Esophagus muscularis mucosa (tissue), 4 donors: ENCODE measurements at regions of chr11 and their contacts with region 1.

Region 1: DNA sequence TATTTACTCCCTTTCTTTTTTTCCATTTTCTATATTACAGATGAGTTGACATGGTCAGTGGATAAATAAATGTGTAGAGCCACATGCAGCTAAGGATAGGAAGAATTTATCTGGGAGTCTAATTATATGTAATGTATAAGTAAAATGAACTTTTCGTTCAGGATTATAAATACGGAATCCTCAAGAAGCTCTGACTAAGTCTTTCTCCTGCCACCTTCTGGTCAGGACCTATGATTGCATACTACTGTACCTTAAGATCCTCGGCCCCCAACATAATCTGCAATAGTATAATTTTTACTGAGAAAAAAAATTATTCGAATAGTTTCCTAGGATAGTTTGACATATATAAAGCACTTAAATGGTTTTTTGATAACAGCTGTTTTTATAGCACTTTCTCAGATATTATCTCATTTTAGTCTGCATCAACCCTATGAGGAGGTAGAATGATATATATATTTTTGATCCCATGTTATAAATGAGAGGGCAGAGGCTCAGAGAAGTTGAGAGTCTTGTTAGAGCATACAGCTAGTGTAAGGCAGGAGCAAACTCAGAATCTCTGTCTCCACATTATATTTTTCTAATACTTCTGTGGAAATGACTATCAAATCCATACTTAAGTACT is 36.1 kb downstream of the CCDC90B start:
- DNase-seq: no peak
- H3K4me3 ChIP-seq: no peak overlapping the region
- H3K27ac ChIP-seq: no peak overlapping the region
- H3K4me1 ChIP-seq: peaks cover 0 to 5% (median 1%) of the 10 kb centered on the region in 4 donors
- H3K27me3 ChIP-seq: no peaks in the 10 kb centered on the region
- CTCF ChIP-seq: peak; percentile 50 to 68 (median 55)
- EP300 ChIP-seq: no peak
- POLR2A ChIP-seq: no peak

Region 2: GRCh38 chr11:82906244-82906654 is 343.8 kb before region 1 on chr11:
- intact Hi-C with region 1: loop called (anchors 2 kb)
- DNase-seq: no peak
- H3K4me3 ChIP-seq: no peak overlapping the region
- H3K27ac ChIP-seq: no peak overlapping the region
- H3K4me1 ChIP-seq: peaks cover 0 to 12% (median 7%) of the 10 kb centered on the region in 4 donors
- H3K27me3 ChIP-seq: no peaks in the 10 kb centered on the region
- CTCF ChIP-seq: peak; percentile 52 to 57 (median 56)
- EP300 ChIP-seq: no peak
- POLR2A ChIP-seq: no peak

Region 3: DNA sequence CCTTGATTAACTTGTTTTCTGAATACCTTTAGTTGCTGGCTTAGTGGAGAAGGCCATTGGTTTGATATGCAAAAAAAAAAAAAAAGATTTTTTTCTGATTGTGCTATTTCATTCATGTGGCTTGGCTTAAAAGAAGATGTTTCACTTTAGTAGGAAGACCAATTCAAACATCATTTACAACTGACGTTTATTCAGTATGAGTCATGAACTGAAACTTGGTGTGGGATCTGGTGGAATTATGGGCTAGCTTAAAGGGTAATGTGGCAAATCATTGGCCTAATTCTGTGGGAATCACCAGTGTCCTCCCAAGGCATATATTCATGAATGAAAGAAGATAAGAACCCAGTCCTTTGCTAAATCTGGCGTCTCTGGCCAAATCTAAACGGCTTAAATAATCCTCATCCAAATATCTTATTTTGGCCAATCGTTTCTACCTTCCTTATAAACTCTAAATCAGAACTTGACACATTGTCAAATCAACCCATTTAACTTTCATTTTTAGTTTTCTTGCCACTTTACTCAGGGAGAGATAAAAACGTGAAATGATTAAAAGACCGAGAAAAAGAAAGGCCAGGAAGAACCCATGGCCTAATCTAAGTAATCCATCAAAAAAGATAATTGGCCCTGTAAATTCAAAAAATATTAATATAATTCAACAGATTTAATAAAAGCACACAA is 271.5 kb before region 1 on chr11:
- intact Hi-C with region 1: no loop called
- DNase-seq: no peak
- H3K4me3 ChIP-seq: no peak overlapping the region
- H3K27ac ChIP-seq: no peak overlapping the region
- H3K4me1 ChIP-seq: peaks cover 13 to 15% (median 14%) of the 10 kb centered on the region in 4 donors
- H3K27me3 ChIP-seq: no peaks in the 10 kb centered on the region
- CTCF ChIP-seq: no peak
- EP300 ChIP-seq: no peak
- POLR2A ChIP-seq: no peak